ENCODE measurements at regions of chr3 and their contacts with region 1.

Region 1: DNA sequence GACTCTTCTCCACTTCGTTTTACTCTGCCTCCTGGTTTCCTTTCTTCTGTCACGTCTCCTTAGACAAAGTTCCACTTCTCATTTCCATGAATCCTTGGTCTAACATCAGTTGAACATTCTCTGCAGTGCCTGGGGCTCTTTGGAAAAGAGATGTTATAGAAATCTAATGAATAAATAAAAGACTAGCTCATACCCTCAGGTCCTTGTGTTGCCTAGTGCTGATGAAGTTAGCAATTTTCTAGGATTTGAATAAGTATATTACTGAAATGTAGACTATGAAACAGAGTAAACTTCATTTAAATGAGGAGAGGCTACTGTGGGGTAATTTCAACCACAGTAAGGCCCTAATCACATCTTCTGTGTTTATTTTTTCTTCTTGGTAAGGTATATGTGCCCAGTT is 146.9 kb upstream of the CADPS start:
- DNase-seq: no peak
- H3K4me3 Mint-ChIP-seq: no peak overlapping the region
- H3K27ac Mint-ChIP-seq: no peak overlapping the region
- H3K4me1 Mint-ChIP-seq: no peaks in the 10 kb centered on the region
- H3K27me3 Mint-ChIP-seq: no peaks in the 10 kb centered on the region
- CTCF ChIP-seq: no peak

Region 2: DNA sequence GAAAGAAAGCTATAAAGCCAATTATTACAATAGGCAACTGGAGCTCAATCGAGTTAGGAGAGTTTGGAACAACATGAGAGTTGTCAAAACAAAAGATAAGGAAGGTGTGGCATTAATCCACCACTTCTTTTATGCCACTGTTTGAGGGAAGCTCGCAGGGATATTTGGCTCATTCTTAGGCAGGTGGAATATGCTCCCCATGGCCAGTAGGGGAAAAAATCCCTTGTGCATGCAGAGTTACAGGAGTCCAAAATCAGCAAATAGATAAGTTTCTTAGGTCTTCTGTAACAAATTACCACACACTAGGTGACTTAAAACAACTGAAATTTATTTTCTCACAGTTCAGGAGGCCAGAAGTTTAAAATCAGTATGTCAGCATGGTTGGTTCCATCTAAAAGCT is 120.6 kb after region 1 on chr3:
- CTCF ChIA-PET with region 1: interaction called, 10 read pairs
- intact Hi-C with region 1: no loop called
- DNase-seq: no peak
- H3K4me3 Mint-ChIP-seq: no peak overlapping the region
- H3K27ac Mint-ChIP-seq: no peak overlapping the region
- H3K4me1 Mint-ChIP-seq: no peaks in the 10 kb centered on the region
- H3K27me3 Mint-ChIP-seq: no peaks in the 10 kb centered on the region
- CTCF ChIP-seq: no peak